Activated CD8-positive, alpha-beta memory T cell treated with anti-CD3 and anti-CD28 coated beads, Interleukin-2, amount 10 ng/mL, durations not matched to agents 7 days and 5 days (primary cell): ENCODE measurements at regions of chr19 and their contacts with region 1.

Region 1: GRCh38 chr19:48965040-48965805 is at the start of gene FTL:
- DNase-seq: peak; percentile 96
- ATAC-seq: peak; percentile 70
- H3K4me3 Mint-ChIP-seq: peak within 1 kb of the TSS; percentile 99
- H3K27ac Mint-ChIP-seq: peak within 1 kb of the TSS; percentile 97
- H3K4me1 Mint-ChIP-seq: peaks cover 67% of the 10 kb centered on the region
- H3K27me3 Mint-ChIP-seq: no peaks in the 10 kb centered on the region
- total RNA-seq, gene FTL: 1,380 to 1,403 TPM

Region 2: DNA sequence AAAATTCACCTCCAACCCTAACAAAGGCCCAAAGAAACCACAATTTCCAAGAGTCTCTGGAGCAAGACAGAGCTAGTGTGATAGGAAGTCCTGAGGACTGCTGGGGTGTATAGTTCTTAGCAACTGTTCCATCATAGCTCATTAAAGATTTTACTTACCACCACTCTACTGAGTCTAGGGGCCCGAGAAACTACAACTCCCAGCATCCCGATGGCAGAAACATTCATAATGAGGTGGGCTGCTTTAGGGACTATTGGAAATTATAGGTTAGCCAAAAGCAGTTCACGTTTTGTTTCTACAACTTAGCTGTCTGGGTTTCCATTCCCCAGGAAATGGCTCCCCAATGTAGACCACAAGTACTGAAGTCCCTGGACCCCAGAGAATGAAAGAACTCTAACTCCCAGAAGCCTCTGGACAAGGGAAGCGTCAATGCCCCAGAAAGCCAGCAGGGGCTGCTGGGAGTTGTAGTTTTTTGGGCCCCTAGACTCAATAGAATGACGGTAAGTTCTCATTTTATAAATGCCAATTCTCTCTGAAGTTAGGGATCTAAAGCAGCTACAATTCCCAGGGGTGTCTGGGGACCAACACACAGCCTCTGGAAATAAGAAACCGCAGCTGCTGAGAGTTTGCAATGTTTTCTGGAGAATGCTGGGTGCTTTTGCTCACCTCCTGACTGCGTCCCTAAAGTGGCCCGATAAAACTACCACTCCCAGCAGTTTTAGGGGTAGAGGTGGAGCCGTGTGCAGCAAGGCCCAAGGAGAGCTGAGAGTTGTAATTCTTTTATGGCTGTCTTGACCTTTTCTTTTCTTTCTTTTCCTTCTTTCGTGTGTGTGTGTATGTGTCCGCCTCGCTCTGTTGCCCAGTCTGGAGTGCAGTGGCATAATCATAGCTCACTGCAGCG is 11.0 kb after region 1 on chr19:
- CTCF ChIA-PET with region 1: interaction called, 29 read pairs
- DNase-seq: peak; percentile 70
- ATAC-seq: peak; percentile 54
- H3K4me3 Mint-ChIP-seq: no peak overlapping the region
- H3K27ac Mint-ChIP-seq: no peak overlapping the region
- H3K4me1 Mint-ChIP-seq: peaks cover 16% of the 10 kb centered on the region
- H3K27me3 Mint-ChIP-seq: no peaks in the 10 kb centered on the region

Region 3: DNA sequence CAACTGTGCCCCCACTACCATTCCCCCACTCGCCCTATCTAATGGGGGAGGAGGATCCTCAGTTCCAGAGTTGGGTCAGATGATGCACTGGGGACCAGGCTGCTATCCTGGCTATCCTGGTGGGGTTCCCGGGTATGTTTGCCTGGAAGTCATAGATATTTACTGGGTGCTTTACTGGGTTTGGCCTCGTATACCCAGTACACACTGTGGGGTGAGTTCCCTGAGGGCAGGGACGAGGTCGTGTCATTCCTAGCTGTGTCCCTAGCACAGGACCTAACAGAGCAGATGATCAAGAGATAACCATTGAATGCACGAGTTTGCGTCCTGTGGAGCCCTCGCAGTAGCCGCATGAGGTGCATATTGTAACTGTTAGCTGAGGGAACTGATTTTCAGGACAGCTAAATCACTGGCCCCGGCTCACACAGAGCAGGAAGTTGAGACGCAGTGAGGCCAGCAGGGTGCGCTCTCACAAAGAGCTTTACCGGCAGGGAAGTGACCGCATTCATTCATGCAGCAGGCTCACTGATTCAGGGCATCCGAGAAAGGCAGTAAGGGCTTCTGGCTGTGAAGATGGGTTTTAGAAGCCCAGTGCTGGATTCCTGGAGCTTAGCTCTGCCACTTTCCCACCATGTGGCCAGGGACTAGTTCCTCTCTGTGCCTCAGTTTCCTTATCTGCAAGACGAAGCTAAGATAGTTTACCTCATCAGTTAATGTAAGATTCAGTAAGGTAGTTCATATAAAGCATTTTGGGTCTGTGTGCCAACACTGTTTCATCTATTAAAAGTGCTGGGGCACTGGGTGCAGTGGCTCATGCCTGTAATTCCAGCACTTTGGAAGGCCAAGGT is 34.5 kb after region 1 on chr19:
- CTCF ChIA-PET with region 1: no interaction called
- DNase-seq: peak; percentile 81
- ATAC-seq: peak; percentile 84
- H3K4me3 Mint-ChIP-seq: no peak overlapping the region
- H3K27ac Mint-ChIP-seq: no peak overlapping the region
- H3K4me1 Mint-ChIP-seq: peaks cover 25% of the 10 kb centered on the region
- H3K27me3 Mint-ChIP-seq: no peaks in the 10 kb centered on the region

Region 4: DNA sequence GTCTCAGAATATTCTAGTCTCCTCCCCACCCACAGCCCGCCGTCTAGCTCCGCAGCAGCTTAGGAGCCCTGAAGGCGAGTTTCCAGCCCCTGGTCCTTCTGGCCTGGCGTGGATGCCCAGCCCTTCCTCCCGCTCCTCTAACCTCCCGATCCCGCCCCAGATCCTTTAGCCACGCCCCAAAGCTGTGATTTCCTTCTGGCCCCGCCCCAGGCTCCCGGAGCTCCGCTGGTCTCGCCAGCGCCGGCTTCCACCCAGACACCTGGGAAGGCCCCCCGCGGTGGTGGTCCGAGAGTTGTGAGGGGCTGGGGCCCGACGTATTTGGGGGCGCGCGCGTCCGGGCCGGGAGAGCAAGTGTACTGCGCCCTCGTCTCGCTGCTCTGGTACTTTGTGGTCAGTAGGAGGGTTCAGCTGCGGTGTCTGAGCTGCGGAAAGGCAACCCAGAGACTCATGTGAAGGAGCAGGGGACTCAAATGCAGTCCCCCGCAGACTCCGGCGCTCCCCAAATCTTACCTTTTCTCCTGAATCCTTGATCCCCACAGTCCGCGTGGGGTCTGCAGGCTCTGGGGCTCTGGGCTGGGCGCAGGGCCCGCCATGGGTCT is 92.5 kb after region 1 on chr19 and contains the start of gene CGB7:
- CTCF ChIA-PET with region 1: no interaction called
- DNase-seq: no peak
- ATAC-seq: peak; percentile 18
- H3K4me3 Mint-ChIP-seq: peak within 1 kb of the TSS; percentile 52
- H3K27ac Mint-ChIP-seq: no peak within 1 kb of the TSS
- H3K4me1 Mint-ChIP-seq: peaks cover 24% of the 10 kb centered on the region
- H3K27me3 Mint-ChIP-seq: peaks cover 62% of the 10 kb centered on the region
- total RNA-seq, gene CGB7: not detected

Region 5: DNA sequence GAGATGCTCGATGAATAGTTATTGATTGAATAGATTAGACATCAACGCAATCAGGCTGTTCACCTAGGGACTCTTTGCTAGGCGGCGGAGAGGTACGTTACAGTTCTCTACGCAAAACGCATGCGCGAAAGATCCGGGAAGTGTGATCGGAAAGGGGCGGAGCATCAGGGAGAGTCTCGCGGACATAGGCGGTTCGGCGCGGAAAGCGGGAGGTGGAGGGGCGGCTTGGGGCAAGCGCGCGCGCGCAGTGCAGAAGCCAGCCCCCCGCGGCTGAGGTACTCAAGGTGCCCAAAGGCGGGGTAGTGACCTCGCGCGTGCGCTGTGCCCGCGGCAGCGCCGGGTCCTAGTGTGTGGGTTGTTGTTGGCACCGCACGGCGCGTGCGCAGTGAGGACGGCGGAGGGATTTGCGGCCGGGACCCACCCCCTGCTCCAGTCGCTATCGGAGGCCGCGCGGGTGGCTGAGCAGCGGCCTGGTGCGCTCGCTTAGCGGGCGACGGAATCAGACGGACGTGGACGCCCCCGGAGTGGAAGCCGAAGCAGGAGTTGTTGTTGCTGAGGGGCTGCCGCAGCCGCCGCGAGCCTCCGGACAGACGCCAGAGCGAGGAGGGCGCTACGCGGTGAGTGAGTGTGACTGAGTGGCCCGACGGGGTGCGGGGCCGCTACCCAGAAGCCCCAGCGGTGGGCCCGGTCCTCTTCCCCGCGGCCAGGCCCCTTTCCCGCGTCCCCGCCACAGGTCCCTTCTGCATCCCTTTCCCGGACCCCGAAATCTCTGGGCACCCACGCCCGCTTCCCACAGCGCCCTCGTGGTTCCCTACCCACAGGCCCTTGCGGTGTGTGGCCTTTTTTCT is 120.0 kb after region 1 on chr19 and contains the start of gene SNRNP70:
- CTCF ChIA-PET with region 1: no interaction called
- DNase-seq: peak; percentile 99
- ATAC-seq: peak; percentile 95
- H3K4me3 Mint-ChIP-seq: peak within 1 kb of the TSS; percentile 94
- H3K27ac Mint-ChIP-seq: peak within 1 kb of the TSS; percentile 90
- H3K4me1 Mint-ChIP-seq: peaks cover 30% of the 10 kb centered on the region
- H3K27me3 Mint-ChIP-seq: no peaks in the 10 kb centered on the region
- total RNA-seq, gene SNRNP70: 222 to 224 TPM